ENCODE measurements at regions of chr1 and their contacts with region 1.

Region 1: DNA sequence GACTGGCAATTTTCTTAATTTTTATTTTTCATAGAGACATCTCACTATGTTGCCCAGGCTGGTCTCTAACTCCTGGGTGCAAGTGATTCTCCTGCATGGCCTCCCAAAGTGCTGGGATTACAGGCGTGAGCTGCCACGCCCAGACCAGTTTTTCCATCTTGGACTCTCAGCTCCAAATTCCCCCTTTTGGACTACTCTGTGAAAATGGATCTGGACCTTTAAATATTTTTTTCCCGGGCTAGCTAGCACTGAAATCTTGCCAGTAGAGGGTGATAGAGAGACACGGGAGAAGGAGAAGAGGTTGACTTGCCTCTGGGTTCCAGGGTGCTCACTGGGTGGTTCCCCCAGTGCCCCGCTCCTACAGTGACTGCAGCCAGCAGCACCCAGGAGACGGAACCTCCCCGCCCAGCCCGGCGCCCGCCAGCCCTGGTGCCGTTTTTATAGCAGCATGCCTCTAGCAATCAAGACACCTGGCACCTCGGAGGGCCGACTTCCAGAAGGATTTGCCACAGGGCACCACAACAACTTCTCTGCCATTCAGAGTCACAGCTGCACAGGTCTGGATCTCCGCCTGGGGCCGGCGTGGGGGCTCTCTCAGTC is 34.7 kb upstream of the SCCPDH start:
- DNase-seq: peak; percentile 25 to 74
- H3K4me3 ChIP-seq: no peak overlapping the region
- H3K27ac ChIP-seq: no peak overlapping the region
- H3K4me1 ChIP-seq: no peaks in the 10 kb centered on the region
- H3K27me3 ChIP-seq: no peaks in the 10 kb centered on the region
- CTCF ChIP-seq: peak; percentile 46 to 78 (median 73)
- EP300 ChIP-seq: no peak
- POLR2A ChIP-seq: no peak
- RAD21 ChIP-seq: peak; percentile 70 to 78

Region 2: DNA sequence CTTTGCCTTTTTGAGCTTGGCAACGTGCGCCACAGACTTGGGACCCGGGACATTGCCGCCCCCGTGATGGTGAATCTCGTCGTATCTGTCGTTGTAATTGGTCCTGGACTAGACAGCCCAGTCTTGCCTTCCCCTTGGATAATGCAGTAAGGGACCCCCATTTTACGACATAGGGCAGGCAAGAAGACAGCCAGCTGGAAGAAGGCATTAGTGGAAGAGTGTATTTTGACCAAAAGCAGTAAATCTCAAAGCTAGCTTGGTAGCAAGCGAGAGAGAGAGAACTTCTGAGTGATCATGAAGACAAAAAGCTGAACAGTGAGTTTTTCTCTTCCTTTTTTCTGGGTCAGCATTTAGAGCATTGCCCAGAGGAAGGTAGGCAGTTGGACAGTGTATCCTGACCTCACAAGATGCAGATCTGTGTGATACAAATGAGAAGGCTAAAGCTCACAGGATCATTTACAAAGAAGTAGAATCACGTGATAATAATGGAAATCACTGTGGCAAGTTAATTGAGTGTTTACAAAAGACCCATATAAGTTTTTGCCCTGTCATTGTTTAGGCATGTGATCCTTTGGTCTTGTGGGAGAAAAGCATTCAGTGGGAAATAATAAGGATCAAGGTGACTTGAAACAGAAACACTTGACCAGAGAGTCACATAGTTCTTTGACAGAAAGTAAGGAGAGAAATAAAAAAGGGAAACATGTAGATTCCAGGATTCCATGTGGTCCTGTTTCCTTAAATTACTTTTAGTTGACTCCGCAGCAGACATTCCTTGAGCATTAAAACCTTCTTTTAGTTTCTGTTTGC is 57.0 kb before region 1 on chr1:
- CTCF ChIA-PET with region 1: no interaction called
- POLR2A ChIA-PET with region 1: no interaction called
- DNase-seq: no peak
- H3K4me3 ChIP-seq: no peak overlapping the region
- H3K27ac ChIP-seq: no peak overlapping the region
- H3K4me1 ChIP-seq: no peaks in the 10 kb centered on the region
- H3K27me3 ChIP-seq: no peaks in the 10 kb centered on the region
- CTCF ChIP-seq: no peak
- EP300 ChIP-seq: no peak
- POLR2A ChIP-seq: no peak
- RAD21 ChIP-seq: no peak

Region 3: GRCh38 chr1:246674049-246674448 is 15.5 kb before region 1 on chr1:
- CTCF ChIA-PET with region 1: interaction called, 32 read pairs
- POLR2A ChIA-PET with region 1: interaction called, 3 read pairs
- DNase-seq: no peak
- H3K4me3 ChIP-seq: no peak overlapping the region
- H3K27ac ChIP-seq: no peak overlapping the region
- H3K4me1 ChIP-seq: peaks cover 0 to 5% (median 4%) of the 10 kb centered on the region in 4 experiments; a peak in 2 of 7 replicates
- H3K27me3 ChIP-seq: no peaks in the 10 kb centered on the region
- CTCF ChIP-seq: no peak
- EP300 ChIP-seq: no peak
- POLR2A ChIP-seq: no peak
- RAD21 ChIP-seq: no peak

Region 4: DNA sequence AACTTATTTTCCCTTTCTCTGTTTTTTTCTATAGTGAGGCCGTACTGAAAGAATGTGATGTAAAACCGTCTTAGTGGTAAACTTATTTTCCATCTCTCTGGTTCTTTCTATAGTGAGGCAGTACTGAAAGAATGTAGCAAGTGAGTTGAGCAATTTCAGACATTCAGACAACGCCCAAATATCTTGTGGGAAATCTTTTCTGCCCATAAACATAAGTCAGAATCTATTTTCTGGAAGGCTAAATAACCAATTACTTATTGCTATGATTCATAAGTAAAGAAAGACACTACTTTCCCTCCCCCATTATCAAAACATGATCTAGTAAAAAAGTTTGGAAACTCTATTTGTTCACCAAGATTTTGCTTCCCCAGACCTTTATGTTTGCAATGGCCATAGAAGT is 15.9 kb after region 1 on chr1:
- CTCF ChIA-PET with region 1: interaction called, 91 read pairs
- POLR2A ChIA-PET with region 1: no interaction called
- DNase-seq: no peak
- H3K4me3 ChIP-seq: no peak overlapping the region
- H3K27ac ChIP-seq: no peak overlapping the region
- H3K4me1 ChIP-seq: no peaks in the 10 kb centered on the region
- H3K27me3 ChIP-seq: no peaks in the 10 kb centered on the region
- CTCF ChIP-seq: no peak
- EP300 ChIP-seq: no peak
- POLR2A ChIP-seq: no peak
- RAD21 ChIP-seq: no peak

Region 5: GRCh38 chr1:246794835-246795671 is 105.5 kb after region 1 on chr1:
- CTCF ChIA-PET with region 1: no interaction called
- POLR2A ChIA-PET with region 1: no interaction called
- DNase-seq: no peak
- H3K4me3 ChIP-seq: no peak overlapping the region; a peak in 1 of 8 replicates
- H3K27ac ChIP-seq: peak overlapping the region; percentile 14; the same call in 1 of the 2 replicates
- H3K4me1 ChIP-seq: peaks cover 5 to 30% (median 27%) of the 10 kb centered on the region in 4 experiments
- H3K27me3 ChIP-seq: no peaks in the 10 kb centered on the region; a peak in 1 of 7 replicates
- CTCF ChIP-seq: no peak
- EP300 ChIP-seq: no peak
- POLR2A ChIP-seq: no peak
- RAD21 ChIP-seq: no peak

Measured in H1 (cell line).